PC-9 (cell line): ENCODE measurements at regions of chr4 and their contacts with region 1.

Region 1: GRCh38 chr4:6640292-6641163 is at the start of gene MRFAP1:
- DNase-seq: peak; percentile 83 to 91
- H3K4me3 ChIP-seq: peak within 1 kb of the TSS; percentile 78
- H3K27ac ChIP-seq: peak within 1 kb of the TSS; percentile 80
- H3K4me1 ChIP-seq: peaks cover 12% of the 10 kb centered on the region
- H3K27me3 ChIP-seq: no peaks in the 10 kb centered on the region
- CTCF ChIP-seq: no peak
- total RNA-seq, gene MRFAP1: 278 and 291 TPM in 2 replicates

Region 2: GRCh38 chr4:6574747-6575502 is 65.6 kb before region 1 on chr4 and contains the start of gene MAN2B2:
- CTCF ChIA-PET with region 1: interaction called, 7 read pairs
- POLR2A ChIA-PET with region 1: interaction called, 4 read pairs
- intact Hi-C with region 1: loop called (anchors 10 kb)
- DNase-seq: peak; percentile 60 to 94
- H3K4me3 ChIP-seq: peak within 1 kb of the TSS; percentile 71
- H3K27ac ChIP-seq: no peak within 1 kb of the TSS
- H3K4me1 ChIP-seq: no peaks in the 10 kb centered on the region
- H3K27me3 ChIP-seq: no peaks in the 10 kb centered on the region
- CTCF ChIP-seq: no peak
- total RNA-seq, gene MAN2B2: 22.1 and 27.8 TPM in 2 replicates

Region 3: GRCh38 chr4:6688879-6689505 is 48.5 kb after region 1 on chr4:
- CTCF ChIA-PET with region 1: no interaction called
- POLR2A ChIA-PET with region 1: interaction called, 17 read pairs
- intact Hi-C with region 1: no loop called
- DNase-seq: peak; percentile 94 to 98
- H3K4me3 ChIP-seq: peak overlapping the region; percentile 46; the same call in 1 of the 2 replicates
- H3K27ac ChIP-seq: peak overlapping the region; percentile 100
- H3K4me1 ChIP-seq: peaks cover 56% of the 10 kb centered on the region
- H3K27me3 ChIP-seq: no peaks in the 10 kb centered on the region
- CTCF ChIP-seq: no peak